ENCODE measurements at regions of chr5 and their contacts with region 1.

Region 1: DNA sequence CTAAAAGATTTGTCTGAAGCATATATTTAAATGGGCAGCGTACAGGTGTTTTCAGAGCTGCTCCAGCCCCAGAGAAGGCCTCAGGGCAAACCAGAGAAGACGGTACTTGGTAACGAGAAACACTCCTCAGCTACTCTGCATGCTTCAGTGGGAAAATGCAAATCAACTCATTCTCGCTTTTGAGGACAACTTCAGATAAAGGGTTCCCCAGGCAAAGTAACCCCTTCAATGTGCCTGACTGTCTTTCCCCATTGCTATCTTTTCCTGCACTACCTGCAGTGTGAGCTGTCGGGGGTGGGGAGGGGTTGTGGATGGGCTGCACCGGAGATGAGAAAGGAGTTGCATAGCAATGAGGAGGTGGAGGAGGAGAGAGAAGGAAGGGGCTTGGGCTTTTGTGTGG is 339.7 kb upstream of the CLINT1 start:
- DNase-seq: no peak
- ATAC-seq: no peak
- H3K4me3 Mint-ChIP-seq: no peak overlapping the region
- H3K27ac Mint-ChIP-seq: no peak overlapping the region
- H3K4me1 Mint-ChIP-seq: no peaks in the 10 kb centered on the region
- H3K27me3 Mint-ChIP-seq: peaks cover 7% of the 10 kb centered on the region

Region 2: DNA sequence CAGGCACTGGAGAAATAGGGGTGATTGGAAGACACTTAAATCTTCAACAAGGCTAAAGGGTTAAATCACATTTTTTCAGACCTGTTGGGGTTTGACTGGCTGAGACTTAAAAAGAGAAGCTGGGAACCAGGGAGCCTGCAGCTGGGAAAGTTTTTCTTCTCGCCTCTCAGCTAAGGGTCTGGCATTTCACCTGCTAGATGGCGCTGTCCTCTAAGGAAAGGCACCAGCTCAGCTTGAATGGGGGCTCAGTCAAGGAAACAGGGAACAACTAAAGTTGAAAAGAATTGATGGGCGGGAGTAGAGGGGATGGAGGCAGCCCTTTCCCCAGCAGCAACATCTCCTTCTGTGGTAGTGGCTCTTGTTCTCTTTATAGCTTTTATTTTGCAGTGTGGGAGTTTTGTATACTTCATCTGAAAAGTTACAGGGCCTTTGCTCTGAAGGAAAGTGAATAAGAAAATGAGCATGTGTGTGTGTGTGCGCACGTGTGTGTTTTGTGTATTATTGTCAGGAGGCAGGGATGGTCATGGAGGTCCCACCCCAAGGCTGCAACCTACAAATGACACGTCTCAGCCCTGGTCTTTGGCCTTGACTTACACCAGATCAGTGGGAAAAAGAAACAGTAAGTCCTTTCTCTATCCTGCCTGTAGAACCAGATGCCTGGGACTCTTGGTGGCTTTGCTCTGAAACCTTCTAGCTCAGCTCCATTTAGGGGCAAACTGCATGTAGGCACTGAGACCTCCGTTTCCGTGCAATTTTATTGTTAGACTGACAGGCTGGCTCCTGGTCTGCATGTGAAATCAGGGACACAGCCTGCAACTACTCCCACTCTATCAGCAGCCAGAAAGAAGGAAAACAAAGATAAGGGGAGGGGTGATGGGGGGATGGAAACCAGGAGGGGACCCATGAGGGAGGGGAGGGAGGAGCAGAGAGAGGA is 23.5 kb before region 1 on chr5:
- CTCF ChIA-PET with region 1: interaction called, 11 read pairs
- POLR2A ChIA-PET with region 1: no interaction called
- intact Hi-C with region 1: no loop called
- DNase-seq: peak; percentile 75
- ATAC-seq: peak; percentile 61
- H3K4me3 Mint-ChIP-seq: no peak overlapping the region
- H3K27ac Mint-ChIP-seq: no peak overlapping the region
- H3K4me1 Mint-ChIP-seq: no peaks in the 10 kb centered on the region
- H3K27me3 Mint-ChIP-seq: no peaks in the 10 kb centered on the region

Region 3: GRCh38 chr5:159642379-159642778 is 1443.7 kb after region 1 on chr5:
- CTCF ChIA-PET with region 1: no interaction called
- POLR2A ChIA-PET with region 1: no interaction called
- intact Hi-C with region 1: no loop called
- DNase-seq: no peak
- ATAC-seq: no peak
- H3K4me3 Mint-ChIP-seq: no peak overlapping the region
- H3K27ac Mint-ChIP-seq: no peak overlapping the region
- H3K4me1 Mint-ChIP-seq: no peaks in the 10 kb centered on the region
- H3K27me3 Mint-ChIP-seq: peaks cover 4% of the 10 kb centered on the region

Measured in activated CD4-positive, alpha-beta T cell treated with anti-CD3 and anti-CD28 coated beads for 36 hours (primary cell).